GM13977 (cell line): ENCODE measurements at regions of chr18 and their contacts with region 1.

Region 1: GRCh38 chr18:5057386-5058348 is 139.4 kb downstream of the AKAIN1 start:
- DNase-seq: peak; percentile 48
- CTCF ChIP-seq: peak; percentile 77

Region 2: DNA sequence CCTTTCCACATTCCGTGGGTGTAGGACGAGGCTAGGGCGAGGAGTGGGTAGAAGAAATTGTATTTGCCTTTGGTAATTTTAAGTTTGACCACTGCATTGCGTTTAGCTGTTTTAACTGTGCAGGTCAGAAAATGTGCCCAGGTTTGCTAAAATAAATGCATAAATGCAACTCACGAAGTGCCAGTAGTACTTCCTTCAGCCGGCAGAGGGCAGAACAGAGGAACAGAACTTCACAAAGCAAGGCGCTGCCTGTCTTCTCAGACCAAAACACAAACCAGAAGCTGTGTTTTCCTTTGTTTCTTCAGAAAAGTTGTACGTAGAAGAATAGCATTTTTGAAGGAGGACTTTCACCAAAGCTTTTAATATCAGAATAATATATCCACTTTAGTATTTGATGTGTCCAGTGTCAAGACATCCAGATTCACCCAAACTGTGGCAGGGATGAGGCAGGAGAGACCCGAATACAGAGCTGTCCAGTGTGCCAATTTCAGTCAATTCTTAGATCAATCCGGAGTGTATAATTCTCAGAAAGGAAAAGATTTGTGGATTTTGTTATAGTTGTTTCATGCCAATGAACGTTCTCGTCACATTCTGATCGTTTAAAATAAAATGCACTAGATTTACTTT is 951.1 kb before region 1 on chr18:
- in situ Hi-C with region 1: loop called (anchors 25 kb)
- DNase-seq: peak; percentile 33
- CTCF ChIP-seq: peak; percentile 82